ENCODE measurements at regions of chr17 and their contacts with region 1.

Region 1: DNA sequence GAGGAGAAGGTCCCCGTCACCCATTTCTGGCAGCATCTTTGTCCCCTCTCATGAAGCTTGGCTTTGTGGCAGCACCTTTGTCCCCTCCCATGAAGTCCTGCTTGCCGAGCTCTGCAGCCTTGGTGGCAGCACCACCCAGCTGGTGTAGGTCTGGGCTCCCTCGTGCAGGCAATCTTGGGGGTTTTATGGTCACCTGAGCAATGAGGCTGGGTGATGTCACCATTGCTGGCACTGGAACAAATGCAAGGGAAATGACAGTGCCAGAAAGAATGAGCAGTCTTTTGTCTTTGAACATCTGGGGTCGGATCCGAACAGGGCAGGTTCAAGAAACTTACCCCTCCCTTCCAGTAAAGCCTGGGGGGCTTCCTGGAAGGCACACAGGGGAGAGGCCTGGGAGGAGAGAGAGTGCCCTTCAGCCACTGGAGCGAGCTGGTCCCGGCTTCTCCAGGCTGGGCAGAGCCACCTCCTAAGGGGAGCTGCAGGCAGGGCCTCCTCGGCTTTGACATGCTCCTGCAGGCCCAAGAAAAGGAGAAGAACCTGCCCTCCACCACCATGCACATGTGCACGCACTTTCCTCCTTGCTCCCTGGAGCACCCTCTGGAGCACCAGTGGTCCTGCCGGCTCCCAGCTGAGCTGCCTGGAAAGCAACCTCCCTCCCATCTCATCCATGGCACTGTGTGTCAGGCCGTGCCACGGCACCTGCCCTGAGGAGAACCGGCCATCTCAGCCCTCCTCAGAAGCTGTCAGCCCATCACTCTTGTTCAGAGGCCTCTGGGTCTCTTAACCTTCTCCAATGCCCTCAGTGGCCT is 16.0 kb downstream of the BTBD17 start:
- DNase-seq: no peak
- H3K4me3 ChIP-seq: no peak overlapping the region
- CTCF ChIP-seq: no peak

Region 2: DNA sequence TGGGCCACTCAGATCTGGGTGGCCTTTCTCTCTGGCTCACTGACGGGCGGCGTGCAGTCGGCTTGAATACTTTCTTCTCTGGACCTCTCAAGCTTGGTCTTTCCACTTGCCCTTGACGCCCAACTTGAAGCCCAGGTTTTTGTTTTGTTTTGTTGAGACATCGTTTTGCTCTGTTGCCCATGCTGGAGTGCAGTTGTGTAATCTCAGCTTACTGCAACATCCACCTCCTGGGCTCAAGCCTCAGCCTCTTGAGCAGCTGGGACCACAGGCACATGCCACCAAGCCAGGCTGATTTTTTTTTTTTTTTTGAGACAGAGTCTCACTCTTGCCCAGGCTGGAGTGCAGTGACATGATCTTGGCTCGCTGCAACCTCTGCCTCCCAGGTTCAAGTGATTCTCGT is 42.3 kb before region 1 on chr17:
- in situ Hi-C with region 1: loop called (anchors 5 kb)
- DNase-seq: no peak
- H3K4me3 ChIP-seq: no peak overlapping the region
- CTCF ChIP-seq: no peak

Region 3: GRCh38 chr17:74427048-74427762 is 81.6 kb after region 1 on chr17:
- in situ Hi-C with region 1: no loop called
- DNase-seq: no peak
- H3K4me3 ChIP-seq: no peak overlapping the region
- CTCF ChIP-seq: no peak

Region 4: GRCh38 chr17:74437702-74438101 is 92.1 kb after region 1 on chr17:
- in situ Hi-C with region 1: loop called (anchors 5 kb)
- DNase-seq: no peak
- H3K4me3 ChIP-seq: no peak overlapping the region
- CTCF ChIP-seq: peak; percentile 52